Ascending aorta (tissue), 2 donors: ENCODE measurements at regions of chr17 and their contacts with region 1.

Region 1: DNA sequence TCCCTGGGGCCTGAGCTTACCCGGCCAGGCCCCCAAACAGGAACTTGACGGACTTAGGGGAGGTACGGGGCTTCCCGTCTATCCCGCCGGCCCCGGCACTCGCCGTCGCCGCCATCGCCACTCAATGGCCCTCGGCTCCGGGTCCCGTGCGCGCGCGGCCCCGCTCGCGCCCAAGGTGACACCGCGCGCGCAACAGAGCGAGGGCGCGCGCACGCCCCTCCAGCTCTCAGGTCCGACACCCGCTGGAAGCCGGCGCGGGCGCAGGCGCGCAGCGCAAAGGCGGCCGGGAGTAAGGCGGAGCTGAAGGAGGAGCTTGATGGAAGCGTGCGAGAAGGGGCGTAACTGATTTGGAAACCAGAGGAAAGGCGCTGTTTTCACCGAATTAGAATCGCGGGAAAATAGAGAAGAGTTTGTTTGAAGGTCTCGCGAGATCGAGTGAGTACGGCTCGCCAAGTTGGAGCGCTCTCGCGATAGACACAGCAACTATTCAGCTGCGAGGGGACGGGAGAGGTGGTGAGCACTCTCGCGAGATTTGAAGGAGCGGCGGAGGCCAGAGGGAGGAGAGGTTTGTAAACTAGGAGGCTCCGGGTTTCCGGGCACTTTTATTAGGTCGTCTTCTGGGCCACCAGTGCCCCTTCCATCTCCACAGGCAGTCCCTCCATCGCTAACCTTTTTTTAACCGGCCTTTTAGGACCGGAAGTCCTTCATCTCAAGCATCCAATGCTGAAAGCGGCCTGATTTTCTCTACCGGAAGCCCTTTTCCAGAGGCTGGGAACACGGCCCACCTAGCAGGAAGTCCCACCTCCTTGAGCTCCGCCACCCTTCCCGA is at the starts of genes RNF167 and SLC25A11:
- DNase-seq: peak; percentile 91 to 98
- H3K4me3 ChIP-seq: peak within 1 kb of the TSS; percentile 79 to 82
- H3K27ac ChIP-seq: peak within 1 kb of the TSS; percentile 88 to 92
- H3K4me1 ChIP-seq: peaks cover 11 to 32% of the 10 kb centered on the region in 2 donors
- H3K27me3 ChIP-seq: no peaks in the 10 kb centered on the region
- CTCF ChIP-seq: no peak
- total RNA-seq, gene RNF167: 164 TPM
- total RNA-seq, gene SLC25A11: 56.2 TPM

Region 2: GRCh38 chr17:4903051-4903818 is 36.8 kb before region 1 on chr17 and contains the start of gene CHRNE:
- intact Hi-C with region 1: loop called (anchors 2 kb)
- DNase-seq: peak in 1 of 2 donors; percentile 90
- H3K4me3 ChIP-seq: peak within 1 kb of the TSS in 1 of 2 donors; percentile 5
- H3K27ac ChIP-seq: peak within 1 kb of the TSS in 1 of 2 donors; percentile 11
- H3K4me1 ChIP-seq: peaks cover 3 to 6% of the 10 kb centered on the region in 2 donors
- H3K27me3 ChIP-seq: peaks cover 7% of the 10 kb centered on the region
- CTCF ChIP-seq: peak; percentile 59 to 75 (median 72)
- total RNA-seq, gene CHRNE: not detected

Region 3: DNA sequence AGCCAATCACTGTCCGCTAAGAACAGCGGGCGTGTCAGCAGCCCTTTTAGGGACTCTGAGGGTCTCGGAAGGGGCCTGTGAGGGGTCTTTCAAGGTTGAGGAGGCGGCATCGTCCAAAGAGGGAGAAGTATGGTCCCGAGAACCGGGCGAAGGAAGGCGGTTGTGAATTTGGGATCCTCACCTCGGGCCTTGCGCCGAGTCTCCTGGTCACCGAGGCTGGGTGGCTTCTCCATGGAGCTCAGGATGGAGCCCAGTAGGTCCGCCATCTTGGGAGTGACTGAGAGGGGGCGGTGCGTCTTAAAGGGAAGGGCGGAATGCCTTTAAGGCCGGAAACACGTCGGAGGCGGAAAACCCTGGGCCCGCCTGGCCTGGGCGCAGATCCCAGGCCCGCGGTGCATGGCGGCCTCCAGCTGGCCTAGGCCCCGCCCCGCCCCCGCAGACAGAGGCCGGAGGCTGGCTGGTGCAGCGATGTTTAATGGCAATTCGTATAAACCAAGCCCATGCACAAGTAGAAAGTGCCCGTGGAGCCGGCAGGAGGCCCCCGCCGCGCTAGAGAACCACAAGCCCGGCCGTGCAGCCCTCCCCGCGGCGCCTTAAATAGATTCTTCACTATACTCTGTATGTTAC is 27.6 kb after region 1 on chr17 and contains the start of gene SPAG7:
- intact Hi-C with region 1: loop called (anchors 1 kb)
- DNase-seq: peak; percentile 63 to 96
- H3K4me3 ChIP-seq: peak within 1 kb of the TSS; percentile 77 to 78
- H3K27ac ChIP-seq: peak within 1 kb of the TSS; percentile 94
- H3K4me1 ChIP-seq: peaks cover 9 to 25% of the 10 kb centered on the region in 2 donors
- H3K27me3 ChIP-seq: no peaks in the 10 kb centered on the region
- CTCF ChIP-seq: peak in 1 of 3 experiments; percentile 3
- total RNA-seq, gene SPAG7: 4.9 TPM

Region 4: DNA sequence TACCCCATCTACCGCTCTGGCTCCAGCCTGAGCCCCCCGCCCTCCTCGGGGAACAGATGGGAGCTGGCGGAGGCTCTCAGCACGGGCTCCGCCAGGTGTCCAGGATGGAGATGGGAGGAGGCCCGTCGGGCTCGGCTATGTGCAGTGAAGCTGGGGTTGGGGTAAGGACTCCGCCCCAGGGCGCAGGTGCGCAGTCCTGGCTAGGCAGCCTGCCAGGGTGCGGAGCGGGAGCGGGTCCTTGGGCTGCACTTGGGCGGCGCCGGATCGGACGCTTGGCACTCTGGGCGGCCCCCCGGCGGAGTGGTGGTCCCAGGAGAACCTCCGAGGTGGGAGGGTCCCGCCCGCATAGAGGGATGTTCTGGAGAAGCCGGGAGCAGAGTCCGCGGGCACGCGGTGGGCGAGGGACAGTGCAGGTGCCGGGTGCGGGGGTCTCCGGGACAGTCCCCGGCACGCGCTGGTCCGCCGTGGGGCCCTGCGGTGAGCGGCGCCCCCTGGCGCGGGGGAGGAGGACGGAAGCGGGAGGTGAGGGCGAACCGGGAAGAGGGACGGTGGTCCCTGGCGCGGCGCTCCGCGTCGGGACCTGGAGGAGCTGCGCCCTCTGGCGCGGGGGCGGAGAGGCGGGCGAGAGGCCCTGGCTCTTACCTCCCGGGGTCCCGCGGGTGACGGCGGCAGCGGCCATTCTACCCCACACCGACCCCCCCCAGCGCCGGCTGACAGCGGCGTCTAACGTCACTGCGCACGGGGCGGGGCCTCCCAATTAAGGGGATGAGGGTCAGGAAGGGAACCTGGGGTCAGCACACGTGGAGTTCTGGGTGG is 47.1 kb after region 1 on chr17 and contains the start of gene CAMTA2:
- intact Hi-C with region 1: loop called (anchors 5 kb)
- DNase-seq: peak; percentile 62 to 95
- H3K4me3 ChIP-seq: peak within 1 kb of the TSS; percentile 86 to 91
- H3K27ac ChIP-seq: peak within 1 kb of the TSS; percentile 91 to 95
- H3K4me1 ChIP-seq: peaks cover 0 to 22% of the 10 kb centered on the region in 2 donors
- H3K27me3 ChIP-seq: no peaks in the 10 kb centered on the region
- CTCF ChIP-seq: peak; percentile 80 to 91 (median 87)
- total RNA-seq, gene CAMTA2: 72.1 TPM

Region 5: DNA sequence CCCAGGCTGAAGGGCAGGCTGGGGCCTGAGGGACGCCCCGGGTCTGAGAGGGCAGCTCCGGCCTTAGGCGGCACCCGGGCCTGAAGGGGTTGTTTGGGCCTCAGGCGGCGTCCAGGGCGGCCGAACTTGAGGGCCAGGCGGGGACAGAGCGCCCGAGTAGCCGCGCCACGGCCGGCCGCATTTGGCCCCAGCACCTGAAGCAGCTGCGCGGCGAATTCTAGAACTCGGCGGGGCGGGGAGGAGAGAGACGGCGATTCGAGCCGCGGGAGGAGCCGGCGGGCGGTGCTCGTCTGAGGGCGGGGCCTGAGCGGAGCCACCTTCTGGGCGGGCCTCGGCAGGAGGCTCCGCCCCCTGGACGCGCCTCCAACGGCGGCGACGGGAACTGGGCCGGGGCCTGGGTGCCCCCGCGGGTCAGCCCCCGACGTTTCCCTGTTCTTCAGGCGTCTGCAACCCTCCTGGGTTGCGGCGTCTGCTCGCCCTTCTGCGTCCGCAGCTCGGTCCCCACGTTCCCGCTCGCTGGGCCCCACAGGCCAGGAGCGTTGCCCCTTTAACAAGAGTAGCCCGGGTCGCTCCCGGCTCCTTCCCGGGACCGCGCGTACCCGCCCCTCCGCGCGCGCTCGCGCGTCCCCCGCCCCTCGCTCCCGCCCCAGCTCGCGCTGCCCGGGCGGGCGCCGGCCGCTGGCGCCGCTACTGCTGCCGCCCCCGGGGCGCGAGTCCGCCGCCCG is 57.5 kb after region 1 on chr17 and contains the starts of genes INCA1 and KIF1C:
- intact Hi-C with region 1: loop called (anchors 1 kb)
- DNase-seq: peak; percentile 56 to 95
- H3K4me3 ChIP-seq: peak within 1 kb of the TSS; percentile 80 to 99
- H3K27ac ChIP-seq: peak within 1 kb of the TSS; percentile 94 to 95
- H3K4me1 ChIP-seq: peaks cover 6 to 17% of the 10 kb centered on the region in 2 donors
- H3K27me3 ChIP-seq: no peaks in the 10 kb centered on the region
- CTCF ChIP-seq: peak in 2 of 3 experiments; percentile 12 to 42
- total RNA-seq, gene INCA1: not detected
- total RNA-seq, gene KIF1C: 94.0 TPM